Activated T-helper 2 cell treated with anti-CD3 and anti-CD28 coated beads, Interferon-gamma antibody, Interleukin-2, Interleukin-4, amounts not matched to agents 10 μg/mL and 5 μg/mL and 100 μg/mL, durations not matched to agents 14 hours and 24 hours and 36 hours (primary cell): ENCODE measurements at regions of chr7 and their contacts with region 1.

Region 1: DNA sequence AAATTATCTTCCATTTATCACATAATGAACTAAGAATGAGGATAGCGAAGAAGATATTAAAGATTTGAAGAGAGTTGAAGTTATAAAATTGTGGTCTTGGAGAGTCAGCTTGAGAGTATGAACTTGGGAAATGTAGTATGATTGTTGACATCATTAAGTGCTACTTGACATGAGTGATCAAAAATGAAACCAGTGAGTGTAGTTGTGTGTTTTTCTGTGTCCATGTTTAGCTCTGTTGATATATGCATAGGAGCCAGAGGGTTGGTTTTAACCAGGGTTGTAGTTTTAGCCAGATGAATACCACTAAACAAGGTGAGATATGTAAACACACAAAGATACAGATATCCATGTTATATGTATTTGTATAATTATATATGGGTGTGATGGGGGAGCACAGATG is 6.2 kb downstream of the TMEM106B start:
- DNase-seq: no peak
- H3K4me3 Mint-ChIP-seq: no peak overlapping the region
- H3K27ac Mint-ChIP-seq: no peak overlapping the region
- H3K4me1 Mint-ChIP-seq: peaks cover 43% of the 10 kb centered on the region
- H3K27me3 Mint-ChIP-seq: no peaks in the 10 kb centered on the region

Region 2: DNA sequence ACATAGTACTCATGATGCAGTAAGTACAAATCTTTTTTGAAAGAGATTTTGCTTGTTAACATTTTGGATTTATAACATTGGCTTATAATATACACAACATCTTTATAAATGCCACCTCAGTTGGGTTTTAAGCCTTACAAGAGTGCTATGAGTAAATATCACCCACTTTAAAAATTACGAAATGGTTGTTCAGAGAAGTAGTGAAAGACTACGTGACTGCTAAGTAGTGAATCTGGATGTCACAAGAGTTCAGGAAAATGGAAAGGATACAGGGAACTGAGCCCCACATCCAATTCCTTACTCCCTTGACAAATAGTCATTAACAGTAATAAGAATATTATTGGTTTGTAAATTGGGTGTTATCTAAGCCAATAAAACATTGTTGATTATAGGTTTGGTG is 13.8 kb after region 1 on chr7:
- intact Hi-C with region 1: loop called (anchors 2 kb)
- DNase-seq: no peak
- H3K4me3 Mint-ChIP-seq: no peak overlapping the region
- H3K27ac Mint-ChIP-seq: no peak overlapping the region
- H3K4me1 Mint-ChIP-seq: peaks cover 8% of the 10 kb centered on the region
- H3K27me3 Mint-ChIP-seq: no peaks in the 10 kb centered on the region

Region 3: DNA sequence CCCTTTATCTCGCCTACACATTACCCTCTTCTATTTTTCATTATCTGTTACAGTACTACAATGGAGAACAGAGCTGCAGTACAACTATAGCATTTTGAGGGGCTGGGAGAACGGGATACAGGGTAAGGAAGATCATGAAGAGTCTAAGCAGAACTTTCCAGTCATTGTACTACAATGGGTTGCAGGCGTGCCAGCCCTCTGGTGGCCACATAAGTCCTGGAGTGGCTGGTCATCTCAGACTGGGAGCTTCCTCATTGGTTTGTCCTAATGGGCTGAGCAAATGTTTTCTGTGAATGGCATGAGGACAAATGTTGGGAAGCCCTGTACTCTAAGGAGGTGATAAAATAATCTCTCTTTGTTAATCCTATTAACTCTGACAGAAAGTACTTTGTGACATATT is 26.8 kb after region 1 on chr7:
- intact Hi-C with region 1: loop called (anchors 1 kb)
- DNase-seq: no peak
- H3K4me3 Mint-ChIP-seq: no peak overlapping the region
- H3K27ac Mint-ChIP-seq: no peak overlapping the region
- H3K4me1 Mint-ChIP-seq: peaks cover 7% of the 10 kb centered on the region
- H3K27me3 Mint-ChIP-seq: no peaks in the 10 kb centered on the region